Left ventricle myocardium inferior (tissue), 1 donor: ENCODE measurements at regions of chr3 and their contacts with region 1.

Region 1: DNA sequence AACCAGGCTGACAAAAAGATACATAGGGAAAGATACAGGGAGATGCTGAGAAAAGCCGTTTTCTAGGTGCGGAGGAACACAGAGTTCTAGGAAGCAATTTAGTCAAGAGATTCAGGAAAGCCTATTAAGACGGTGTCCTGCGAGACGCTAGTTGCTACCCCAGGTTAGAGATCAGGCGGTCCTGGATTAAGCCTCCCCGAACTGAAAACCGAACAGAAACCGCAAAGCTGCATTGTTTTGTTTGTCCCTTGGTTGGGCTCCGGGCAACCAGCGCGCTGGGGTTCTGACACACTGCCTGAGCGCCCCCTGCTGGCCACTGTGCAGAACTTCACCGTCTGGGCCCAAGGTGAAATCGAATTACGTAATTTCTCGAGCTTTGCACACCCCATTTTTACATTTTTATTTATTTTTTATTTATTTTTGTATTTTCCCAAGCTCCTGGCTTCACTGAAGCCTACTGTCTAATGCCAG is 37.3 kb upstream of the NDUFB4 start:
- DNase-seq: peak; percentile 88
- H3K4me3 ChIP-seq: peak overlapping the region; percentile 65
- H3K27ac ChIP-seq: peak overlapping the region; percentile 94
- H3K4me1 ChIP-seq: peaks cover 66% of the 10 kb centered on the region
- H3K27me3 ChIP-seq: no peaks in the 10 kb centered on the region
- CTCF ChIP-seq: peak; percentile 100

Region 2: DNA sequence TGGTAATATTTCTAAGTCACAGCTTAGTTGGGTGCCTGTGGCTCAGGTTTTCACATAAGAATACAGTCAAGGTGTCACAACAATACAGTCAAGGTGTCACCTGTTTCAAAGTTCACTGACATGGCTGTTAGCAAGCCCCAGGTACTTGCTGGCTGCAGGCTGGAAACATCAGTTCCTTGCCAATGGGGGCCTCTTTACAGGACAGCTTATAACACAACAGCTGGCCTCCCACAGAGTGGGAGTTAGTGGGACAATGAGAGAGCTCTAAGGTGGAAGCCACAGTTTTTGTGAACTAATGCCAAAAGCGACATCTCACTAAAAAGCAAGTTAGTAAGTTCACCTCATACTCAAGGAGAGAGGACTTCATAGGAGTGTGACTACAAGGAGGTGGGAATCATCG is 319.2 kb before region 1 on chr3:
- intact Hi-C with region 1: loop called (anchors 5 kb)
- DNase-seq: no peak
- H3K4me3 ChIP-seq: no peak overlapping the region
- H3K27ac ChIP-seq: no peak overlapping the region
- H3K4me1 ChIP-seq: no peaks in the 10 kb centered on the region
- H3K27me3 ChIP-seq: no peaks in the 10 kb centered on the region
- CTCF ChIP-seq: no peak

Region 3: GRCh38 chr3:120506828-120507774 is 51.7 kb before region 1 on chr3:
- intact Hi-C with region 1: loop called (anchors 10 kb)
- DNase-seq: no peak
- H3K4me3 ChIP-seq: no peak overlapping the region
- H3K27ac ChIP-seq: peak overlapping the region; percentile 49
- H3K4me1 ChIP-seq: peaks cover 28% of the 10 kb centered on the region
- H3K27me3 ChIP-seq: no peaks in the 10 kb centered on the region
- CTCF ChIP-seq: peak; percentile 77

Region 4: GRCh38 chr3:120795017-120795648 is 236.3 kb after region 1 on chr3:
- intact Hi-C with region 1: loop called (anchors 2 kb)
- DNase-seq: peak; percentile 71
- H3K4me3 ChIP-seq: no peak overlapping the region
- H3K27ac ChIP-seq: no peak overlapping the region
- H3K4me1 ChIP-seq: no peaks in the 10 kb centered on the region
- H3K27me3 ChIP-seq: no peaks in the 10 kb centered on the region
- CTCF ChIP-seq: peak; percentile 85